ENCODE measurements at regions of chr5 and their contacts with region 1.

Region 1: GRCh38 chr5:44797841-44798240 is 10.9 kb upstream of the MRPS30 start:
- DNase-seq: no peak
- ATAC-seq: no peak
- H3K4me3 ChIP-seq: no peak overlapping the region
- H3K27ac ChIP-seq: no peak overlapping the region
- H3K4me1 ChIP-seq: no peaks in the 10 kb centered on the region
- H3K27me3 ChIP-seq: no peaks in the 10 kb centered on the region
- CTCF ChIP-seq: no peak
- EP300 ChIP-seq: no peak
- POLR2A ChIP-seq: no peak
- RAD21 ChIP-seq: no peak

Region 2: GRCh38 chr5:43631182-43631910 is 1166.5 kb before region 1 on chr5:
- CTCF ChIA-PET with region 1: no interaction called
- POLR2A ChIA-PET with region 1: no interaction called
- in situ Hi-C with region 1: loop called (anchors 25 kb)
- intact Hi-C with region 1: no loop called
- DNase-seq: peak; percentile 71
- ATAC-seq: peak; percentile 97
- H3K4me3 ChIP-seq: no peak overlapping the region
- H3K27ac ChIP-seq: no peak overlapping the region
- H3K4me1 ChIP-seq: no peaks in the 10 kb centered on the region
- H3K27me3 ChIP-seq: no peaks in the 10 kb centered on the region
- CTCF ChIP-seq: peak; percentile 74
- EP300 ChIP-seq: no peak
- POLR2A ChIP-seq: no peak
- RAD21 ChIP-seq: no peak

Measured in HepG2 (cell line).